Endothelial cell of umbilical vein (primary cell): ENCODE measurements at regions of chr21 and their contacts with region 1.

Region 1: GRCh38 chr21:29360799-29361765 is 62.4 kb downstream of the BACH1 start:
- DNase-seq: no peak
- H3K4me3 ChIP-seq: no peak overlapping the region
- H3K27ac ChIP-seq: no peak overlapping the region
- H3K4me1 ChIP-seq: no peaks in the 10 kb centered on the region
- H3K27me3 ChIP-seq: no peaks in the 10 kb centered on the region
- CTCF ChIP-seq: no peak
- POLR2A ChIP-seq: no peak

Region 2: DNA sequence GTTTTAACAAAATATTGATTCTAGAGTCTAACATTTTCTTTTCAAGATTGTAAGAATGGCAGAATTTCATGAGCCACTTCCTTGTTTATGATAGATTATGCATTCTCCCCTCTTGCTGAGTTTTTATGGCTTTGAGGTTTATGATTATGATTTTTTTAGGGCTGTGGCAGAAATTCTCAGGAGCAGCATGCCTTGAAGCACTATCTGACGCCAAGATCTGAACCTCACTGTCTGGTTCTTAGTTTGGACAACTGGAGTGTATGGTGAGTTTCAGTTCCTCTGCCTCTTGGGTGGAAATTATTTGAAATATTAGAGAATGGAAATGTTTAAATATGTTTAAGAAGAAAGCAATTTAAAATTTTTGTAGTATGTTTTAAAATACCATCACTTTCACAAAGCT is 326.4 kb before region 1 on chr21:
- CTCF ChIA-PET with region 1: no interaction called
- POLR2A ChIA-PET with region 1: no interaction called
- dilution Hi-C with region 1: no loop called
- intact Hi-C with region 1: no loop called
- DNase-seq: no peak
- H3K4me3 ChIP-seq: no peak overlapping the region
- H3K27ac ChIP-seq: no peak overlapping the region
- H3K4me1 ChIP-seq: no peaks in the 10 kb centered on the region
- H3K27me3 ChIP-seq: no peaks in the 10 kb centered on the region
- CTCF ChIP-seq: no peak
- POLR2A ChIP-seq: no peak

Region 3: DNA sequence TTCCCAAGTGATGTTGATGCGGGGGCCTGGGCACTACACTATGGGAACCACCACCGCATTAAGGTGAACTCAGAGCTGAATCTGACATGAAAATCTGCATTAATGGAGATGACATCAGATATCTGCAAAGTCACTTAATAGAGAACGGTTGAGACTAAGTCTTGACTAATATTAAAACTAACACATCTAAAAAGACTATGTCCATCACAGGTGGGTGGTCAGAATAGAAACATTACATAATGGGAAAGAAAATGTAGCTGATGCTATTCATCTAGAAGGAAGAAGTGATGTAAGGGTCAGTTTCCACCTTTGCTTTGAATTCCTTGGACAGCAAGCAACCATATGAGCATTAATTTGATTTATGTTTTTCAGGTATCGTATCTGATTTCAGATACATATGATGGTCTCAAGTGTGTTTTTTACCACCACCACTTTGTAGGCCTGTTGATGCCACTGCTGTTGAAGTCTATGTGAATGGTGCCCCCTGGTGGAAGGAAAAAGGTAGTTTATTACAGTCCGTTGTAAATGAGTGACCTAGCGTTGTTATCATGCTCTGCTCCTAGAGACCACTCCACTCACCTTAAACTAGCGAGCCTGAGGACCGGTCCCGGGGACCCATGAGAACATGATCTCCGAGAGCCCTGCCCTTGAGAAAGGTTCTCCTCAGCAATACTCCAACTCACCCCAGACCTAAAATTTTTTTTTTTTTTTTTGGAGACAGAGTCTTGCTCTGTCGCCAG is 11.2 kb after region 1 on chr21:
- CTCF ChIA-PET with region 1: interaction called, 30 read pairs
- POLR2A ChIA-PET with region 1: no interaction called
- dilution Hi-C with region 1: no loop called
- intact Hi-C with region 1: no loop called
- DNase-seq: peak; percentile 75
- H3K4me3 ChIP-seq: no peak overlapping the region
- H3K27ac ChIP-seq: no peak overlapping the region
- H3K4me1 ChIP-seq: peaks cover 4% of the 10 kb centered on the region
- H3K27me3 ChIP-seq: no peaks in the 10 kb centered on the region
- CTCF ChIP-seq: peak; percentile 57 to 61
- POLR2A ChIP-seq: no peak

Region 4: DNA sequence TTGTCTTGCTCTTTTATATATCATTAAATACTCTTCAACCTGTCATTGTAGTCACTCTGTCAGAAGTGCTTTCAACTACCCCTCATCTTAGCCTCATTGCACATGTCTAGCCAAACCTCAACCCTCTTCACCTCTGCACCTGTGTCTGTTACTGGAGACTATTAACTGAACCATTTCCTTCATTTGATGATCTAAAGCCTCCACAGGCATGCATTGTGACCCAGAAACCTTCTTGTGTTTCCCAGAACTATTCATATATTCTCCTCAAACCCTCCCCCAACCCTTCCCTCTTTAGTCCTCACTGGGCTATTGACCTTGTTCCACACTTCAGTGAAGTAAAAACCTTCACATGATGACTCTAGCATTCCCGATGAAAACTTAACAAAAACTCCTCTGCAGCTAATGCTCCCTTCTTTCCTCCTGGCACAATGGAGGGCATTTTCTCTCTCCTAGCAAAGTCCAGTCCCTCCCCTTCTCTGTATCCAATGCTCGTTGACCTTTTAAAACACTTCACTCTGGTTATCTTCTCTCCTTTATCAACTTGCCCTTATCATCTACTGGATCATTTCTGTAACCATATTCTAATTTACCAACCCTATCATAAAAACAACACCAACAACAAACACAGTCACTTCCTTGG is 23.7 kb after region 1 on chr21:
- CTCF ChIA-PET with region 1: no interaction called
- POLR2A ChIA-PET with region 1: no interaction called
- dilution Hi-C with region 1: no loop called
- intact Hi-C with region 1: no loop called
- DNase-seq: no peak
- H3K4me3 ChIP-seq: no peak overlapping the region
- H3K27ac ChIP-seq: no peak overlapping the region
- H3K4me1 ChIP-seq: no peaks in the 10 kb centered on the region
- H3K27me3 ChIP-seq: no peaks in the 10 kb centered on the region
- CTCF ChIP-seq: no peak
- POLR2A ChIP-seq: no peak

Region 5: GRCh38 chr21:29523646-29524045 is 162.6 kb after region 1 on chr21:
- CTCF ChIA-PET with region 1: no interaction called
- POLR2A ChIA-PET with region 1: no interaction called
- dilution Hi-C with region 1: no loop called
- intact Hi-C with region 1: no loop called
- DNase-seq: no peak
- H3K4me3 ChIP-seq: no peak overlapping the region
- H3K27ac ChIP-seq: no peak overlapping the region
- H3K4me1 ChIP-seq: no peaks in the 10 kb centered on the region
- H3K27me3 ChIP-seq: no peaks in the 10 kb centered on the region
- CTCF ChIP-seq: no peak
- POLR2A ChIP-seq: no peak

Region 6: GRCh38 chr21:31072533-31072932 is 1711.5 kb after region 1 on chr21:
- CTCF ChIA-PET with region 1: no interaction called
- POLR2A ChIA-PET with region 1: no interaction called
- dilution Hi-C with region 1: no loop called
- intact Hi-C with region 1: no loop called
- DNase-seq: no peak
- H3K4me3 ChIP-seq: no peak overlapping the region
- H3K27ac ChIP-seq: no peak overlapping the region
- H3K4me1 ChIP-seq: no peaks in the 10 kb centered on the region
- H3K27me3 ChIP-seq: no peaks in the 10 kb centered on the region
- CTCF ChIP-seq: no peak
- POLR2A ChIP-seq: no peak